ENCODE measurements at regions of chr5 and their contacts with region 1.

Region 1: GRCh38 chr5:132500931-132501630 is 10.5 kb upstream of the IRF1 start:
- DNase-seq: peak; percentile 49 to 89 (median 79)
- ATAC-seq: peak; percentile 26
- H3K4me3 ChIP-seq: no peak overlapping the region
- H3K4me3 Mint-ChIP-seq: no peak overlapping the region
- H3K27ac ChIP-seq: peak overlapping the region in 1 of 2 experiments; percentile 86
- H3K27ac Mint-ChIP-seq: no peak overlapping the region
- H3K4me1 ChIP-seq: peaks cover 32% of the 10 kb centered on the region
- H3K4me1 Mint-ChIP-seq: peaks cover 36% of the 10 kb centered on the region
- H3K27me3 ChIP-seq: no peaks in the 10 kb centered on the region
- H3K27me3 Mint-ChIP-seq: peaks cover 3% of the 10 kb centered on the region
- CTCF ChIP-seq: peak; percentile 76

Region 2: GRCh38 chr5:132064738-132065331 is 436.2 kb before region 1 on chr5:
- CTCF ChIA-PET with region 1: no interaction called
- POLR2A ChIA-PET with region 1: no interaction called
- intact Hi-C with region 1: loop called in 1 of 2 experiments (anchors 2 kb)
- DNase-seq: peak; percentile 56 to 85 (median 80)
- ATAC-seq: peak; percentile 77
- H3K4me3 ChIP-seq: no peak overlapping the region
- H3K4me3 Mint-ChIP-seq: no peak overlapping the region
- H3K27ac ChIP-seq: no peak overlapping the region
- H3K27ac Mint-ChIP-seq: no peak overlapping the region
- H3K4me1 ChIP-seq: no peaks in the 10 kb centered on the region
- H3K4me1 Mint-ChIP-seq: peaks cover 2% of the 10 kb centered on the region
- H3K27me3 ChIP-seq: no peaks in the 10 kb centered on the region
- H3K27me3 Mint-ChIP-seq: no peaks in the 10 kb centered on the region
- CTCF ChIP-seq: peak; percentile 97

Region 3: DNA sequence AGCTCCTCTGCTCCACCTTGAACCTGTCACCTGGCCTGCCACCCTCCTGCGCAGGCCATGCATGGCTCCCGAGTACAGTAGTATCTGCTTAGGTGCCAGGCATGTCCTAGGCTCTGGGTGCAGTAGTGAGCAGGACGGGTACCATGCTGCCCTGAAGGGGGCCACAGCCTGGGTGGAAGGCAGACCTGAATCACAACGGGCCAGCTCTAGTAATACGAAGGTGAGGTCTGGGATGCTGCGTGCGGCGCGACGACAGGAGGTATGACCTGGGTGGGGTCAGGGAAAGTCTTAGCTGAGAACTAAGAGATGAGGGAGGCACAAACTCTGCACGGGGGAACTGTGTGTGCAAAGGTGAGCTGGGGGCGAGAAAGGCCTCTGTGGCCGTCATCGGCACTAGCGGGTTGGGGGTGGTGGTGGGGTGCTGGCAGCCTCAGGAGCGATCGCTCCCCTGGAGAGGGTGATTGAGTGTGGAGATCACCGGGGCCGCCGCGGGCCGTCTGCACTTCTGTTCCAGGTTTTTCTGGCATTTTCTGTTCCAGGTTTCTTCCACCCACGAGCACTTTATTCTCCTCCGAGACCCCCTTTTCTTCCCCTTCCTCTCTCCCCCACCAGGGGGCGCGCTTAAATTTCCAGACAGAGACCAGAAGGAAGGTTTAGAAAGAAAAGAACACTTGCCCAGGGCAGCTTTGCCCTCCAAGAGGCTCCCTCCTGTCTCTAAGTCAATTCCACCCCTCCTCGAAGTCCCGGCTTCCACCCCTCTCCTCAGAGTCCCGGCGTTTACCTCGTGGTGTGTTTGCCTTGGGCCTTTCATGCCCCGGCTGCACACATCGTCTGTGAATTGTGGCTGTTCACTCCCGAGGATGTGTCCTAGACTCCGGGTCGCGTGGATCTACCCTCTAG is 228.5 kb before region 1 on chr5:
- CTCF ChIA-PET with region 1: interaction called, 8 read pairs
- POLR2A ChIA-PET with region 1: interaction called, 3 read pairs
- intact Hi-C with region 1: loop called in 1 of 2 experiments (anchors 2 kb)
- DNase-seq: peak; percentile 31 to 79 (median 62)
- ATAC-seq: peak; percentile 49
- H3K4me3 ChIP-seq: no peak overlapping the region
- H3K4me3 Mint-ChIP-seq: no peak overlapping the region
- H3K27ac ChIP-seq: no peak overlapping the region
- H3K27ac Mint-ChIP-seq: no peak overlapping the region
- H3K4me1 ChIP-seq: peaks cover 4% of the 10 kb centered on the region
- H3K4me1 Mint-ChIP-seq: peaks cover 3% of the 10 kb centered on the region
- H3K27me3 ChIP-seq: peaks cover 0 to 2% of the 10 kb centered on the region in 2 experiments
- H3K27me3 Mint-ChIP-seq: peaks cover 17% of the 10 kb centered on the region
- CTCF ChIP-seq: peak; percentile 83

Region 4: DNA sequence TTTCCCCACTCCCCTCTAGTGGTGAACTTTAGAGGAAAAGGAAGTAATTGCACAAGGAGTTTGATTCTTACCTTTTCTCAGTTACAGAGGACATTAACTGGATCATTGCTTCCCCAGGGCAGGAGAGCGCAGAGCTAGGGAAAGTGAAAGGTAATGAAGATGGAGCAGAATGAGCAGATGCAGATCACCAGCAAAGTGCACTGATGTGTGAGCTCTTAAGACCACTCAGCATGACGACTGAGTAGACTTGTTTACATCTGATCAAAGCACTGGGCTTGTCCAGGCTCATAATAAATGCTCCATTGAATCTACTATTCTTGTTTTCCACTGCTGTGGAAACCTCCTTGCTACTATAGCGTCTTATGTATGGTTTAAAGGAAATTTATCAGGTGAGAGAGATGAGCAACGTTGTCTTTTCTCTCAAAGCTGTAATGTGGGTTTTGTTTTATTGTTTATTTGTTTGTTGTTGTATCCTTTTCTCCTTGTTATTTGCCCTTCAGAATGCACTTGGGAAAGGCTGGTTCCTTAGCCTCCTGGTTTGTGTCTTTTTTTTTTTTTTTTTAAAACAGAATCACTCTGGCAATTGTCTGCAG is 106.3 kb before region 1 on chr5:
- CTCF ChIA-PET with region 1: interaction called, 425 read pairs
- POLR2A ChIA-PET with region 1: interaction called, 10 read pairs
- intact Hi-C with region 1: no loop called
- DNase-seq: no peak
- ATAC-seq: no peak
- H3K4me3 ChIP-seq: no peak overlapping the region
- H3K4me3 Mint-ChIP-seq: no peak overlapping the region
- H3K27ac ChIP-seq: no peak overlapping the region
- H3K27ac Mint-ChIP-seq: no peak overlapping the region
- H3K4me1 ChIP-seq: peaks cover 41% of the 10 kb centered on the region
- H3K4me1 Mint-ChIP-seq: peaks cover 53% of the 10 kb centered on the region
- H3K27me3 ChIP-seq: no peaks in the 10 kb centered on the region
- H3K27me3 Mint-ChIP-seq: no peaks in the 10 kb centered on the region
- CTCF ChIP-seq: no peak

Region 5: DNA sequence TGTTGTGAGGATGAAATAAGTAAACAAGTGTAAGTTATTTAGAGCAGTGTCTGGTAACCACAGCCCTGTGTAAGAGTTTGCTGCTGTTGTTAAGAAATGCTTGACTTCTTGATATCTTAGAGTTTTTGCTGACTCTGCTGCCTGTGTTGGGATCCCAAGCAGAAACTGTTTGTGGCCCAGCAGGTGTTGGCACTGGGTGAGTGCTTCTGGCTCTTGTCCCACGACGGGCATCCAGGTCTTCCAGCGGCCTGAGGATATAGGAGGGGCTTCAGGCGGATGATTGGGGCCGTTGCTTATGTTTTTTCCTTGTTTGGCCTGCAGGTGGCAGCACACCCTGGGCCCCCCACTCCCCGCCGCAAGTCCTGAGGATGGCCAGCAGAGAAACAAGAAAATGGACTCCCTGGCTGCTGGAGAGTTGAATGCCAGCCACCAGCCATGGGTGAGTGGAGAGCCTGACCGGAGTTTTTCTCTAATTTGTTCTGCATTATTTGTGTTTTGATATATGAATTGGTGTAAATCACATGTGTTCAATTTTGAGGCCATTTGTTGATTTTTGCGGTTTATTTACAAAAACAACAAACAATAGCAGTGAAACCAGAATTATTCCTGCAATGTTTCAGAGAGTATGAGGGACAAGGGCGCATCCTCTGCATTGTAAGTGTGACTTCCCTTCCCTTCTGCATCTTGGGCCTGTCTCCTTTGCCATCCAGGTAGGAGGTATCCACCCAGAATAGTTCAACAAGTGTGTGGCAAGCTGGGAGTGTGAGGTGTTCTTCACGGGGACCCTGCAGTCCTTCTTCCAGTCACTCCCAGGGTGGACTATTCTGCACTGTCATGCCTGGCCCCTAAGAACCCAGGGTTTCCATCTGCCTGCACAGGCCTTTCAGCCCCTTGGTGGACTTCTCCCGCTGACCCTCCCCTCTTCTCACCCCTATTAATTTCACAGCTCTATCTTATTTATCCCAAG is 81.3 kb before region 1 on chr5:
- CTCF ChIA-PET with region 1: interaction called, 18 read pairs
- POLR2A ChIA-PET with region 1: interaction called, 11 read pairs
- intact Hi-C with region 1: loop called (anchors 1 kb)
- DNase-seq: peak; percentile 27 to 84 (median 64)
- ATAC-seq: peak; percentile 71
- H3K4me3 ChIP-seq: peak overlapping the region; percentile 6 to 9
- H3K4me3 Mint-ChIP-seq: peak overlapping the region; percentile 80
- H3K27ac ChIP-seq: peak overlapping the region; percentile 38 to 98
- H3K27ac Mint-ChIP-seq: peak overlapping the region; percentile 94
- H3K4me1 ChIP-seq: peaks cover 82% of the 10 kb centered on the region
- H3K4me1 Mint-ChIP-seq: peaks cover 92% of the 10 kb centered on the region
- H3K27me3 ChIP-seq: no peaks in the 10 kb centered on the region
- H3K27me3 Mint-ChIP-seq: no peaks in the 10 kb centered on the region
- CTCF ChIP-seq: peak; percentile 89

Region 6: GRCh38 chr5:132456296-132457001 is 44.6 kb before region 1 on chr5:
- CTCF ChIA-PET with region 1: interaction called, 25 read pairs
- POLR2A ChIA-PET with region 1: interaction called, 65 read pairs
- intact Hi-C with region 1: loop called in 1 of 2 experiments (anchors 5 kb)
- DNase-seq: peak in 8 of 9 experiments; percentile 53 to 90 (median 77)
- ATAC-seq: peak; percentile 55
- H3K4me3 ChIP-seq: peak overlapping the region; percentile 21 to 30
- H3K4me3 Mint-ChIP-seq: peak overlapping the region; percentile 65
- H3K27ac ChIP-seq: peak overlapping the region; percentile 89 to 91
- H3K27ac Mint-ChIP-seq: peak overlapping the region; percentile 99
- H3K4me1 ChIP-seq: peaks cover 90% of the 10 kb centered on the region
- H3K4me1 Mint-ChIP-seq: peaks cover 92% of the 10 kb centered on the region
- H3K27me3 ChIP-seq: no peaks in the 10 kb centered on the region
- H3K27me3 Mint-ChIP-seq: no peaks in the 10 kb centered on the region
- CTCF ChIP-seq: no peak

Region 7: GRCh38 chr5:132841305-132842086 is 340.4 kb after region 1 on chr5:
- CTCF ChIA-PET with region 1: no interaction called
- POLR2A ChIA-PET with region 1: no interaction called
- intact Hi-C with region 1: no loop called
- DNase-seq: no peak
- ATAC-seq: no peak
- H3K4me3 ChIP-seq: no peak overlapping the region
- H3K4me3 Mint-ChIP-seq: no peak overlapping the region
- H3K27ac ChIP-seq: no peak overlapping the region
- H3K27ac Mint-ChIP-seq: no peak overlapping the region
- H3K4me1 ChIP-seq: no peaks in the 10 kb centered on the region
- H3K4me1 Mint-ChIP-seq: no peaks in the 10 kb centered on the region
- H3K27me3 ChIP-seq: no peaks in the 10 kb centered on the region
- H3K27me3 Mint-ChIP-seq: no peaks in the 10 kb centered on the region
- CTCF ChIP-seq: no peak